ENCODE measurements at regions of chr4 and their contacts with region 1.

Region 1: DNA sequence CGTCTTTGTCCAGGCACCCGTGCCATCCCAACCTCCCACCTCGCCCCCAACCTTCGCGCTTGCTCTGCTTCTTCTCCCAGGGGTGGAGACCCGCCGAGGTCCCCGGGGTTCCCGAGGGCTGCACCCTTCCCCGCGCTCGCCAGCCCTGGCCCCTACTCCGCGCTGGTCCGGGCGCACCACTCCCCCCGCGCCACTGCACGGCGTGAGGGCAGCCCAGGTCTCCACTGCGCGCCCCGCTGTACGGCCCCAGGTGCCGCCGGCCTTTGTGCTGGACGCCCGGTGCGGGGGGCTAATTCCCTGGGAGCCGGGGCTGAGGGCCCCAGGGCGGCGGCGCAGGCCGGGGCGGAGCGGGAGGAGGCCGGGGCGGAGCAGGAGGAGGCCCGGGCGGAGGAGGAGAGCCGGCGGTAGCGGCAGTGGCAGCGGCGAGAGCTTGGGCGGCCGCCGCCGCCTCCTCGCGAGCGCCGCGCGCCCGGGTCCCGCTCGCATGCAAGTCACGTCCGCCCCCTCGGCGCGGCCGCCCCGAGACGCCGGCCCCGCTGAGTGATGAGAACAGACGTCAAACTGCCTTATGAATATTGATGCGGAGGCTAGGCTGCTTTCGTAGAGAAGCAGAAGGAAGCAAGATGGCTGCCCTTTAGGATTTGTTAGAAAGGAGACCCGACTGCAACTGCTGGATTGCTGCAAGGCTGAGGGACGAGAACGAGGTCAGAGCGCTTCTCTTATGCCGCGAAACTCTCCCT is at the start of gene TET2:
- DNase-seq: peak; percentile 61
- ATAC-seq: peak; percentile 94
- H3K4me3 ChIP-seq: peak within 1 kb of the TSS; percentile 75 to 89 (median 82)
- H3K27ac ChIP-seq: peak within 1 kb of the TSS; percentile 64
- H3K4me1 ChIP-seq: peaks cover 44% of the 10 kb centered on the region
- H3K27me3 ChIP-seq: no peaks in the 10 kb centered on the region; a peak in 2 of 5 replicates
- CTCF ChIP-seq: peak; percentile 13; the same call in 1 of the 2 replicates
- EP300 ChIP-seq: no peak
- POLR2A ChIP-seq: peak; percentile 36 to 72
- RAD21 ChIP-seq: peak; percentile 60
- total RNA-seq, gene TET2: 4.6 and 4.8 TPM in 2 replicates

Region 2: GRCh38 chr4:105191621-105192210 is 45.3 kb after region 1 on chr4:
- CTCF ChIA-PET with region 1: interaction called, 3 read pairs
- POLR2A ChIA-PET with region 1: no interaction called
- in situ Hi-C with region 1: no loop called
- intact Hi-C with region 1: loop called (anchors 2 kb)
- DNase-seq: no peak
- ATAC-seq: no peak
- H3K4me3 ChIP-seq: no peak overlapping the region
- H3K27ac ChIP-seq: no peak overlapping the region
- H3K4me1 ChIP-seq: peaks cover 18% of the 10 kb centered on the region
- H3K27me3 ChIP-seq: no peaks in the 10 kb centered on the region
- CTCF ChIP-seq: no peak
- EP300 ChIP-seq: no peak
- POLR2A ChIP-seq: no peak
- RAD21 ChIP-seq: no peak

Region 3: DNA sequence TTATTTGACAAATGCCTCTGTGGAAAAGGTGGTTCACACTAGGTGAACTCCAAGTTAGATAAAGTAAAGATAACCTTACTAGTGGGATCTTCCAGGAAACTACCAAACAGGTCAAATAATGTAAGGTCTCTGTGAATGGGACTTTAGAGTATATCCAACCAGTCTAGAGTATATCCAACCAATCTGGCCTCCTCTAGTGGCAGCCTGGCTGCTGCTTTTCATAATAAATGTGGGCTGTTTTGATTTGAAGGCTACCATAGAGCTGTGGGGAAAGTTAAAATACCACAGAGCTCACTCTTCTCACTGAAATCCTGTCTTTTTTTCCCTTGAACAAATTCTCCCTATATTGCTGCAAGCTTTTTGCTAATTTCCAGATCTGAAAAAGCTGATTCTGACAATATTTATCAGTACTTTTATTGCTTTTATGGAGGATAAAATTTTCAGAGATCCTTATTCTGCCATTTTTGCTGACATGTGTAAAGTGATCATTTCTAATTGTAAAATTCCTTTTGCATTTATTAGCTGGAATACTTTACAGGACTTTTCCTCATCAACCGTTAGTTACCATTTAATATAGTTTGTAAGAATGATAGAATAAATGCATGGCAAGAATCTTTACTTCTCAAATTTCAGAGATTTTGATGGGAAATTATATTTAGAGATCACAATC is 111.5 kb after region 1 on chr4:
- CTCF ChIA-PET with region 1: no interaction called
- POLR2A ChIA-PET with region 1: no interaction called
- in situ Hi-C with region 1: no loop called
- intact Hi-C with region 1: loop called (anchors 5 kb)
- DNase-seq: no peak
- ATAC-seq: peak; percentile 56; the same call in 2 of the 3 replicates
- H3K4me3 ChIP-seq: no peak overlapping the region
- H3K27ac ChIP-seq: no peak overlapping the region
- H3K4me1 ChIP-seq: no peaks in the 10 kb centered on the region
- H3K27me3 ChIP-seq: no peaks in the 10 kb centered on the region
- CTCF ChIP-seq: no peak
- EP300 ChIP-seq: no peak
- POLR2A ChIP-seq: no peak
- RAD21 ChIP-seq: no peak

Region 4: GRCh38 chr4:105345838-105346237 is 199.4 kb after region 1 on chr4:
- CTCF ChIA-PET with region 1: no interaction called
- POLR2A ChIA-PET with region 1: no interaction called
- in situ Hi-C with region 1: no loop called
- intact Hi-C with region 1: loop called (anchors 5 kb)
- DNase-seq: no peak
- ATAC-seq: peak; percentile 16; the same call in 1 of the 3 replicates
- H3K4me3 ChIP-seq: no peak overlapping the region
- H3K27ac ChIP-seq: no peak overlapping the region
- H3K4me1 ChIP-seq: peaks cover 47% of the 10 kb centered on the region
- H3K27me3 ChIP-seq: no peaks in the 10 kb centered on the region
- CTCF ChIP-seq: no peak
- EP300 ChIP-seq: no peak
- POLR2A ChIP-seq: no peak
- RAD21 ChIP-seq: no peak

Region 5: DNA sequence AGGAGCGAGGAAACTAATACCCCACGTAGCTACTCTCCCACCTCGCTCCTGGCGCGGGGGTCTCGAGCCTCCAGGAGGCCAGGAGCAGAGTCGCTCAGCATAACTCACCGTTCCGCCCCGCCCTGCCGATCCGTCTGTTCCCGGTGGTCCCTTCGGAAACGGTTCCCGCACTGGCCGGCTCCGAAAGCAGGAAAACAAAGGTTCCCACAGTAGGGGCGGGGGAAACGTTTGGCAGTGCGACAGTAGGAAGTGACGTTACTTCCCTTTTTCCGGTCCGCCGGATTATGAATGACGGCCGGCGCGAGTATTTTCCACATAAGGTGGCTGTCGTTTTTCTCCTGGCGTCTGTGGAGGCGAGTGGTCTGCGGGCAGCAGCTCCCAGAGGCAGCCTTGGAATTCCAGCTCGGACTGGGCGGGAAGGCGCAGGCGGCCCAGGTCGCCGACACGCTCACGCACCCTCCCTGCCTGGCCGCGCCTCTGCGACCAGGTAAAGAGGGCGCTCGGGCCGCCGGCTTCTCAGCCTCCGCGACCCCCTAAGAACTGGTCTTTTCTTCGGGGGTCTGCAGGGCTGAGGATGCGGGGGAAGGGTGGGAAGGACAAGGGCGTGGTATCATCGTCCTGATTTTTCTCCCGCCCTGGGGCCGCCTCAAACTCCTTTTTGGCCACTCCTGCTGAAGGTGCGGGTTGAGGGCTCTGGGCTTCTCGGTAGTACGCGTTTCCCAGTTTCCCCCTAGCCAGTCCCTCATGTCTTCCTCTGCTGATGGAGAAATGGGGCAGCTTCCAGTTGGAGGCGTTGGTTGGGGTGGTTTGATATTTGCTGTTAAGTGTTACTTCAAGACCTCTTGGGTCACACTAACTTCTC is 562.3 kb after region 1 on chr4 and contains the starts of genes GSTCD and INTS12:
- CTCF ChIA-PET with region 1: no interaction called
- POLR2A ChIA-PET with region 1: no interaction called
- in situ Hi-C with region 1: no loop called
- intact Hi-C with region 1: loop called (anchors 1 kb)
- DNase-seq: peak; percentile 82
- ATAC-seq: peak; percentile 93
- H3K4me3 ChIP-seq: peak within 1 kb of the TSS; percentile 80 to 98 (median 82)
- H3K27ac ChIP-seq: peak within 1 kb of the TSS; percentile 90
- H3K4me1 ChIP-seq: peaks cover 40% of the 10 kb centered on the region
- H3K27me3 ChIP-seq: no peaks in the 10 kb centered on the region; a peak in 1 of 5 replicates
- CTCF ChIP-seq: peak; percentile 42; the same call in 1 of the 2 replicates
- EP300 ChIP-seq: peak; percentile 79 to 91; a peak in 3 of 4 replicates
- POLR2A ChIP-seq: peak; percentile 90 to 91
- RAD21 ChIP-seq: peak; percentile 50; the same call in 1 of the 2 replicates
- total RNA-seq, gene GSTCD: 30.8 and 38.7 TPM in 2 replicates
- total RNA-seq, gene INTS12: 21.1 and 22.9 TPM in 2 replicates

Measured in HepG2 (cell line).